ENCODE measurements at regions of chr6 and their contacts with region 1.

Region 1: DNA sequence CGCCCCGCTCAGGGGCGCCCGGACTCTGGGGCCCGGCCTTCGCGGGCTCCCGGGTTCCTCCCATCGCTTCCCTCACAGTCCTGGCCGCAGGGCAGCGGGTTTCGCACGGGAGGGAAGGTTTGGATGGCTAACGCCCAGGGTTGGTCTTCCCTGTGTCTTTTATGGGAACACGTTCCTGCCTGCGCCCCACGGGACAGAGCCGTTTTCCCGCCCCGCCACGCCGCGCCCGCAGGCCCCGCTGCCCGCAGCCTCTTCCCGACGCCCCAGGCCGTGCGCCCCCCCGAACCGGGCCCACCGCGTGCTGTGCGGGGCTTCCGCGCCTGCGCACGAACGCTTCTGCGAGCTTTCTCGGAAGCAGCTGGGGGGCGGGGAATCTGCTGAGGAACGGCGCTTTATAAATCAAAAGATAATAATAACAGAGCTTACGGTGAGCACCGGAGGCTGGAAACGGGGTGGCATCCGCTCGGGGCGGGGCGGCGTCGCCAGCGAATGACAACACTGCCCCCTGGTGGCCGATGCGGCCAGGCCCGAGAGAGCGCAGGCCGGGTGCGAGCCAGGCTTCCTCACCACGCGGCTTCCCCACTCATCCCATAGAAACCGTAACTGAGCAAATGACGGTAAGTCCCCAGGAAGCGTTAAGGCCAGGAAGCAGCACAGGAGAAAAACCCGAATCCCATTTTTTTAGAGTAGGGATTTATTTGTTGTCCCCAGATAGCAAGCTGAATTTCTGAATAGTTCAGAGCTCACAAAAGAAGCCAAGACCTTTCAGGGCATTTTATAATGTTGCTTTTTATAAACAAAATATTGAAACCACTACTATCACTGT is 116.4 kb downstream of the MYLK4 start:
- DNase-seq: peak; percentile 86
- H3K4me3 Mint-ChIP-seq: peak overlapping the region; percentile 57
- H3K27ac Mint-ChIP-seq: no peak overlapping the region
- H3K4me1 Mint-ChIP-seq: peaks cover 5% of the 10 kb centered on the region
- H3K27me3 Mint-ChIP-seq: peaks cover 27% of the 10 kb centered on the region

Region 2: DNA sequence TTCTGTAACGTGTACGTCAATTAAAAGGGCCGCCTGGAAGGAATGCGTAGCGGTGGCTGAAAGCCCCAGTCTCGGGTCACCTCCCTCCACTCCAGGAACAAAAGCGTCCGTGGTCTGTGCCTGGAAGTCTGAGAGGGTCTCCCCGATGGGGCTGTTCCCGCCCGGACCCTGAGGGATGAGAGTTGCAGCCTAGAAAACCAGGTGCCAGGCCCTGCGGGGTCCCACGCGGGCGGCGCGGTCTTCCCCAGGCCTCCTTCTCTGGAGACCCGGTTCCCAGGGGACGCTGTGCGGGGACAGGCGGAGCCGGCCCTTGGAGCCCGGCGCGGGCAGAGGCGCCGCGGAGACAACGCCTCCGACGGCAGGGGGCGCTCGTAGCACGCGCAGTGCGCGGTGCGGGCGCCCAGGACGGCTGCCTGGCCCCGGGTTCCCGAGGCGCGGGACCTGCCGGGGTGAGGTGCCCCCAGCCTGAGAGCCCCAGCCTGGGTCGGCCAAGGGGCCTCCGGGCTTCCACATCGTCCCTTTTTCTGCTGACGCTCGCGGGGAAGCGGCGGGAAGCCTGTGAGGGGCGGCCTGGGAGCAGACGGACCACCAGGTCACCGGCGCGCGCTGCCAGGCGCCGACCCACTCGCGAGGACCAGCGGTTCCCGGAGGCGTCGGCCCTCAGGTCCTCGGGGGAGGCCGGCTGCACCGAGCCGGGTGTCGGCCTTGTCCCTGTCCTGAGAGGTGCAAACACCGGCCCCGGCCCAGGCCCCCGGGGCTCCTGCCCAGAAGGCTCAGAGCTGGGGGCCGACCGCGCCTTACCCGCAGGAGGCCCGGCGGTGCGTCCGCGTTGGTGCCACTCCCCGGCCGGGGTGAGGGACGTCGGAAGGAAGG is 1030.0 kb before region 1 on chr6:
- CTCF ChIA-PET with region 1: interaction called, 23 read pairs
- POLR2A ChIA-PET with region 1: no interaction called
- intact Hi-C with region 1: loop called (anchors 1 kb)
- DNase-seq: peak; percentile 65
- H3K4me3 Mint-ChIP-seq: no peak overlapping the region
- H3K27ac Mint-ChIP-seq: no peak overlapping the region
- H3K4me1 Mint-ChIP-seq: peaks cover 34% of the 10 kb centered on the region
- H3K27me3 Mint-ChIP-seq: peaks cover 78% of the 10 kb centered on the region

Region 3: GRCh38 chr6:1624851-1625781 is 1009.2 kb before region 1 on chr6:
- CTCF ChIA-PET with region 1: interaction called, 11 read pairs
- POLR2A ChIA-PET with region 1: no interaction called
- intact Hi-C with region 1: no loop called
- DNase-seq: no peak
- H3K4me3 Mint-ChIP-seq: peak overlapping the region; percentile 49
- H3K27ac Mint-ChIP-seq: no peak overlapping the region
- H3K4me1 Mint-ChIP-seq: peaks cover 11% of the 10 kb centered on the region
- H3K27me3 Mint-ChIP-seq: peaks cover 52% of the 10 kb centered on the region

Region 4: GRCh38 chr6:2353412-2354137 is 280.8 kb before region 1 on chr6:
- CTCF ChIA-PET with region 1: interaction called, 21 read pairs
- POLR2A ChIA-PET with region 1: no interaction called
- intact Hi-C with region 1: no loop called
- DNase-seq: peak; percentile 70
- H3K4me3 Mint-ChIP-seq: no peak overlapping the region
- H3K27ac Mint-ChIP-seq: no peak overlapping the region
- H3K4me1 Mint-ChIP-seq: no peaks in the 10 kb centered on the region
- H3K27me3 Mint-ChIP-seq: no peaks in the 10 kb centered on the region

Region 5: GRCh38 chr6:2524090-2524489 is 110.3 kb before region 1 on chr6:
- CTCF ChIA-PET with region 1: interaction called, 15 read pairs
- POLR2A ChIA-PET with region 1: no interaction called
- intact Hi-C with region 1: no loop called
- DNase-seq: no peak
- H3K4me3 Mint-ChIP-seq: no peak overlapping the region
- H3K27ac Mint-ChIP-seq: no peak overlapping the region
- H3K4me1 Mint-ChIP-seq: peaks cover 5% of the 10 kb centered on the region
- H3K27me3 Mint-ChIP-seq: peaks cover 15% of the 10 kb centered on the region

Region 6: DNA sequence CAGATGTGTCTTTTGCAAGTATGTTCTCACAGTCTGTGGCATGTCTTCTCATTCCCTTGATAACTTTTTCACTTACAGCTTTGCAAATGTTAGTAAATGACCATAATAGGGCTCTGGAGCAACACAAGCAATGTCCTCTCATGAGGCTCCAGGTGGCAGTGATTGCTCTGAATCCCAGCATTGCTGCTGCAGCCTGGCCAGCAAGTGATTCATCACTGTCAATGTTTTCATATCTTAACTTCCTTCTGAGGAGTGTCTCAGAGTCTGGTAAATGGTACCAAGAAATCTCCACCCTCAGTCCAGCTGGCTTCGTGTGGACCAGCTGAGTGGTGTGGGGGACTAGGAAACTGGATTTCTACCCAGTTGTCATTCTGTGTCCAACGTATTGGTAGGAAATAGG is 23.3 kb before region 1 on chr6:
- CTCF ChIA-PET with region 1: interaction called, 11 read pairs
- POLR2A ChIA-PET with region 1: no interaction called
- intact Hi-C with region 1: no loop called
- DNase-seq: no peak
- H3K4me3 Mint-ChIP-seq: no peak overlapping the region
- H3K27ac Mint-ChIP-seq: no peak overlapping the region
- H3K4me1 Mint-ChIP-seq: no peaks in the 10 kb centered on the region
- H3K27me3 Mint-ChIP-seq: peaks cover 14% of the 10 kb centered on the region

Region 7: DNA sequence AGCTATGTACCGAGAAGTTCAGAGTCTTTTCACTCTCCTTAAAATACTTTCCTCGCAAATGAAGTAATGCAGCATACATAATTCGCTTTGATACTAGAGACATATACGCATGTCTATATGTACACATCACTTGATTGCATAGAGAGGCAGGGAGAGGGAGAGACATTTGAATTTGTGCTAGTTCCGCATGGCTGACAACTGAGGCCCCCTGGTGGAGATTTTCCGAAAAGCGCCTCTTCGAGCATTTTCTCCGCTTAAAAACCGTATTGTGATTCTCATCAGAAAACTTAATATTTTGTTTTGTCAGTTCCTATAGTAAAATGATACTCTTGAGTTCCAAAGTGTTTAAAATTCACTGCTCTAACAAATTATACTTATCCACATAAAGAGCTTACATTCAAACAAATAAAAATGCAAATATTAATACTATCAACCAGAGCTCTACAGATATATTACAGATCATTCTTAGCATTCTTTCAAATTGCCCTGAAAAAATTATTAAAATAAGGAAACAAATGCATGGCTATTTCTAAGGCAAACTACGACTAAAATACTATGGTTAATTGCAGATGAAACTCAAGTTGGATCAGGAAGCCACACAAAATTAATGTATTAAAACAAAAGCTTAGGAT is 115.7 kb after region 1 on chr6:
- CTCF ChIA-PET with region 1: interaction called, 15 read pairs
- POLR2A ChIA-PET with region 1: no interaction called
- intact Hi-C with region 1: loop called (anchors 10 kb)
- DNase-seq: peak; percentile 80
- H3K4me3 Mint-ChIP-seq: no peak overlapping the region
- H3K27ac Mint-ChIP-seq: no peak overlapping the region
- H3K4me1 Mint-ChIP-seq: peaks cover 2% of the 10 kb centered on the region
- H3K27me3 Mint-ChIP-seq: peaks cover 12% of the 10 kb centered on the region

Measured in activated CD4-positive, alpha-beta memory T cell treated with anti-CD3 and anti-CD28 coated beads for 36 hours (primary cell).